Posterior vena cava (tissue), 2 donors: ENCODE measurements at regions of chr17 and their contacts with region 1.

Region 1: GRCh38 chr17:81012573-81013447 is 21.2 kb downstream of the CHMP6 start:
- DNase-seq: no peak

Region 2: GRCh38 chr17:80991645-80992076 is 21.1 kb before region 1 on chr17 and contains the start of gene CHMP6:
- intact Hi-C with region 1: loop called in 1 of 2 experiments (anchors 1 kb)
- DNase-seq: peak; percentile 93
- total RNA-seq, gene CHMP6: 23.7 to 25.9 TPM

Region 3: DNA sequence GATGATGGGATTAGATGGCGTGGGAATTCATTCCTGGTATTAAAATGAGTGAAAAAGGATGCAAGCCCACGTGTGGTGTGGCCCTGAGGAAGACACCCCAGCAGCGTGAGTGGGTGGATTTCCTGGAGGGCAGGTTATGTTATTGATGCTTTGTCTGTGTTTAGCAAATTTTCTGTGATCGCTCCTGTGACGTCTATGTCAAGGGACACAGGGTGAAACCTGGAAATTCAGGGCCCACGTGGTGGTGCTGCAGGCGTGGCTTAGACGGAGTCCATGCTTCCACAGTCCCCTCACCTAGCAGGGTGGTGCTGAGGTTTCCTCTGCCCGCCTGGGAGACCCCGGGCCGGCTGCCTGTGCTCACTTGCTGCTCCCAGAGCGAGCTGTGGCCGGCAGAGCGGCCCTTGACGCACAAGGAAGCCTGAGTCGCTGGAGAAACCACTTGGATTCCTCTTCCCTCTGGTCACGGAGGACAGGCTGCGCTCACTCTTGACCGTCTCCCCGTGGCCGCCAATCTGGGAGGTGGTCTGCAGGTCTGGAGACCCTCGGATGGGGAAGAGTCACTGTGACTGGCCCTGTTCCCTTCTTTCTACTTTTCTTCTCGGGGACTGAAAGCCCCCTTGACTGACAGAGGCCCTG is 45.6 kb after region 1 on chr17:
- intact Hi-C with region 1: loop called in 1 of 2 experiments (anchors 1 kb)
- DNase-seq: no peak

Region 4: DNA sequence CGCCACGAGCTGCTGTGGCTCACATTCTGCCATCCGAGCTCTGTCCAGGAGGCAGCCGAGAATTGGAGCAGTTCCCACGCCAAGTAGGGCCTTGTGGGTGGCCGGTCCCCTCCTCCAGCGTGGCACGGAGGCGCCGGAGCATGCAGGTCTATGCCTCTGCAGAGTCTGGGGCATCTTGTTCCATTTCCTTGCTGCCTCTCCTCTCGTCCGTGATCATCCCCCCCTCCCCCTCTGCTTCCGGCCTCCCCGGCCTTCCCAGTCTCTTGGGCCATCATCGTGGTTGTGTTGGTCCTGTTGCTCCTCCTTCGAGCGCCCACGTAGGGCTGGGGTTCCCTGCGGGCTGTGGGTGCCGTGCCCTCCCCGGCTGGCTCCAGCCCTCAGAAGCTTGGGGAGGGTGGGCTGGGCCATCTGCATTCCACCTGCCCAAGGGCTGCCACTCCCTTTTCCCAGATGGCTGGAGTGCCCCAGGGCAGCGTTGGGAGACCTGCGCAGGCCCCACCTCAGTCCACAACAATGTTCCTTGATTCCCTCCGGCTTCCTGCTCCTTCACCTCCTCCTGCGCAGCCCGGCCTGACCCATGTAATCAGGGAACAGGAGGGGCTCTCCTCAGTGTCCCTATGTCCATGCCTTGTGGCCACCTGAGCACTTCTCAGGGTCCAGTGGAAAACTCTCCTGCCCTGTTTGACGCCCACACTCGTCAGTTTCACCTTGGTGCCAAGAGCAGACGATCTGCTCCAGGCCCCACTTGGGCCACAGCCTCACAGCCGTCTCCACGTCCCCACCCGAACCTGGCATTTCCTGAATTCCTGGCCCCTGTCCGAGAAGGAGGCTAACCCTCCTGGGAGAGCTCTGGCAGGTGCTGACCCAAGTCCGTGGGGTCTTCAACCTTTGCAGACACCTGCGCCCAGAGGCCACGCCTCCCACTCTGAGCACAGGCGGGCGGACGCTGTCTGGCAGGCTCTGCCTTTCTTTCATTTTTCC is 59.2 kb after region 1 on chr17:
- intact Hi-C with region 1: no loop called
- DNase-seq: no peak